ENCODE measurements at regions of chr4 and their contacts with region 1.

Region 1: DNA sequence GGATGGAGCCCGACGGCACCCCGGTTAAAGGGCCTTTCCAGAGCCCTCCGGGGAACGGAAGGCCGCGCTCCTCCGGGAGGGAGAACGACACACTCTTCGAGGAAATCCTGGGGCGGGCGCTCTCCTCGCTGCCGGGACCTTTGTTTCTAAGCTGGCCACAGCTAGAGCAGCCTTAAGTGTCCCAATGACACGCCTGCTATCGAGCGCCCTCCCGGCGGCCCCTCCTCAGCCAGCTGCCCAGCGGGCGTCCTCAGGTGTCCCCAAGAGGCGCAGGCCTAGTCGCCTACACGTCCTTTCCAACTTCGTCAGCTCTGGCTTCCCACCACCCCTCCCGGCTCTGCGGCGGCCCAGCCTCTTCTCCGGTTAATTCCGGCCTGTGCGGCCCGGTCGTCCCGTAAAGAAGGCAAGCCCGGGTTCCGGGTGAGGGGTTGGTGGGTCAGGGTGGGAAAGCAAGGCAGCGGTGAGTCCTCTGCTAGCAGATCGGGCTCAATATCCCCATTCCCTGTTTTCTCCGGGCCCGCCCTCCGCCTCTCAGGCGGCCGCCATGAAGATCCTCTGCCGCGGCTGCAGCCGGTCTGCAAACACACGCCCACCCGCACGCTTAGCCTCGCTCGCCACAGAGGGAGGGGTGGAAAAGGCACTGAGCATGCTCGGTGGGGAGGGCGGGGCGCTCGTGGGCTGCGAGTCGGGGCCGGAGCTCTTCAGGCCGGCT is 449 bp upstream of the RAP1GDS1 start:
- DNase-seq: peak; percentile 97
- H3K4me3 ChIP-seq: peak overlapping the region; percentile 65
- H3K27ac ChIP-seq: peak overlapping the region; percentile 99
- H3K4me1 ChIP-seq: peaks cover 5% of the 10 kb centered on the region
- H3K27me3 ChIP-seq: no peaks in the 10 kb centered on the region
- CTCF ChIP-seq: no peak

Region 2: GRCh38 chr4:98143001-98143899 is 117.5 kb before region 1 on chr4 and contains the start of gene STPG2:
- intact Hi-C with region 1: loop called (anchors 5 kb)
- DNase-seq: peak; percentile 94
- H3K4me3 ChIP-seq: peak within 1 kb of the TSS; percentile 53
- H3K27ac ChIP-seq: peak within 1 kb of the TSS; percentile 97
- H3K4me1 ChIP-seq: no peaks in the 10 kb centered on the region
- H3K27me3 ChIP-seq: no peaks in the 10 kb centered on the region
- CTCF ChIP-seq: peak; percentile 45
- total RNA-seq, gene STPG2: 0.19 TPM in 1 of 2 donors, not detected in the other

Region 3: DNA sequence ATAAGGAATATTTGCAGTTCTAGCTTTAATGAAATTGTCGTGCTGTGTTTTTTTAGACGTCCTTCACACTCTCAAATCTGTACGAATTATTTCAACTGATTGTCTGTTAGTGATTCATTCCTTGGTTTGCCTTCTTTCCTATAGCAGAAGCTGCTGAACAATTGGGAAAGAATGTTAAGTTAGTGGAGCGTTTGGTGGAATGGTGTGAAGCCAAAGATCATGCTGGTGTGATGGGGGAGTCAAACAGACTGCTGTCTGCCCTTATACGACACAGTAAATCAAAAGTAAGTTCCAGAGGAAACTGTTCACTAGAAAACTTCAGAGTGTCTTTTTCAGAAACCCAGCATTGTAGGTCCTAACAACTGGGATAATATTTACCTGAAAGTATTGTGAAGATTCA is 160.4 kb after region 1 on chr4:
- intact Hi-C with region 1: no loop called
- DNase-seq: no peak
- H3K4me3 ChIP-seq: no peak overlapping the region
- H3K27ac ChIP-seq: no peak overlapping the region
- H3K4me1 ChIP-seq: no peaks in the 10 kb centered on the region
- H3K27me3 ChIP-seq: no peaks in the 10 kb centered on the region
- CTCF ChIP-seq: no peak

Region 4: DNA sequence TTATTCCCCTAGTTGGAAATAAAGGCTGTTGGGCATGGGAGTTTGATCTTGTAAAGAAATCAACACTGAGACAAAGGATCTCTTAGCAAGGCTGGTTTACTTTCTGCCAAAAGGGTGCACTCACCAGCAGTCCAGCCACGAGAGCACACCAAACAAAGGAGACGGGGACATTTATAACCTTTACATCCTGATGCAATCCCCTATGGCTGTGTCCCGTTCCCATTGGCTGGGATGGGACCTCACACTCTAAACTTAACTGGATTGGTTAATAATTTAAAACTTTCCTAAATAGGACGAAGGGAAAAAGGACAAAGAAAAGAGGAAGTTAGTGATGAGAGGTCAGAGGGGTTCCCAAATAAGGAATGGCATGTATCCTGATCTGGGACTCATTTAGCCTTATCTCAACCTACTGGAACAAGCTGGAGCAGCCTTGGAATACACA is 752.7 kb after region 1 on chr4:
- intact Hi-C with region 1: no loop called
- DNase-seq: no peak
- H3K4me3 ChIP-seq: no peak overlapping the region
- H3K27ac ChIP-seq: no peak overlapping the region
- H3K4me1 ChIP-seq: no peaks in the 10 kb centered on the region
- H3K27me3 ChIP-seq: no peaks in the 10 kb centered on the region
- CTCF ChIP-seq: no peak

Measured in colonic mucosa (tissue), 4 donors.